Posterior cingulate gyrus (tissue), 11 donors: ENCODE measurements at regions of chr3 and their contacts with region 1.

Region 1: DNA sequence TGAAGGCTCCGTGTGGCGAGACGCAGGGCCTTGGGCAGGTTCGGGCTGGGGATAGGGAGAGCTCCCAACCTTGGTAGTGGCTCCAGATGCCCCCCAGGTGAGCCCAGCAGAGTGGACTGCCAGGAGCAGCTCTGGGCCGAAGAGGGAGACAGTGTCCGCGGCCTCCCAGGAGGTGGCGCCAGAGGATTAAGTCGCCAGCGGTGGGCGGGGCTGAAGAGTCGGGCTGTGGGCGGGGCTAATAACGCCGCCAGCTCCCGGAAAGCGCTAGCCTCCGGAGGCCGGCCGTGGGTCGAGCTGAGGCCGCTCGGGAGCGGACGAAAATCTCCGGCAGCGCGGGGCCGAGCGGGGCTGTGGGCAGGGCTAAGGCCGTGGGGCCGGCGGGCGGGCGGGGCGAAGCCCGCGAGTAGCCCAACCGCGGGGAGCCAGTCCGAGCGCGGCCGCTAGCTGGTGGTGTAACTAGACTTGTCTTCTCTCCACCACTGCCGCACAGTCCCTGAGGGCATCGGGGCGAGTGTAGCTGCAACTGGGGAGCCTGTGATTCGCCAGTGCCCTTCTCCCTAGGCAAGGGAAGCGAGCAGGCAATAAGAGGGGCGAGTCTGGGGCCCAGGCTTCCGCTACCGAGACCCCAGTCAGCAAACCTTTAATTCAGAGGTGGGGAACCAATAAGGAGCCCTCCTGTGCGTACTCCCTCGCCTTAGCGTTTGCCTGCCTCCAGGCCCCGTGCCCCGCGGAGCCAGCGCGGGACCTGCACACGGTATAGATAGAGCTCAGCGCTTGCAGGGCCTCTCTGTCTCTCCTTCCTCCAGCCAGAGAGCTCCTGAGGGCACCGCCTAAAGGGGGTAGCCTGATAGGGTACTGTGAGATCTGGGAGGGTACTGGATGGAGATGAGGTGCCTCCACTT is 14.4 kb upstream of the BSN start:
- DNase-seq: peak; percentile 90 to 99 (median 94)

Region 2: GRCh38 chr3:49629866-49630265 is 90.0 kb after region 1 on chr3:
- intact Hi-C with region 1: no loop called
- DNase-seq: peak in 9 of 10 donors; percentile 44 to 97 (median 87)

Region 3: GRCh38 chr3:49671291-49672288 is 131.7 kb after region 1 on chr3:
- intact Hi-C with region 1: loop called (anchors 1 kb)
- DNase-seq: peak; percentile 47 to 93 (median 68)